ENCODE measurements at regions of chr18 and their contacts with region 1.

Region 1: DNA sequence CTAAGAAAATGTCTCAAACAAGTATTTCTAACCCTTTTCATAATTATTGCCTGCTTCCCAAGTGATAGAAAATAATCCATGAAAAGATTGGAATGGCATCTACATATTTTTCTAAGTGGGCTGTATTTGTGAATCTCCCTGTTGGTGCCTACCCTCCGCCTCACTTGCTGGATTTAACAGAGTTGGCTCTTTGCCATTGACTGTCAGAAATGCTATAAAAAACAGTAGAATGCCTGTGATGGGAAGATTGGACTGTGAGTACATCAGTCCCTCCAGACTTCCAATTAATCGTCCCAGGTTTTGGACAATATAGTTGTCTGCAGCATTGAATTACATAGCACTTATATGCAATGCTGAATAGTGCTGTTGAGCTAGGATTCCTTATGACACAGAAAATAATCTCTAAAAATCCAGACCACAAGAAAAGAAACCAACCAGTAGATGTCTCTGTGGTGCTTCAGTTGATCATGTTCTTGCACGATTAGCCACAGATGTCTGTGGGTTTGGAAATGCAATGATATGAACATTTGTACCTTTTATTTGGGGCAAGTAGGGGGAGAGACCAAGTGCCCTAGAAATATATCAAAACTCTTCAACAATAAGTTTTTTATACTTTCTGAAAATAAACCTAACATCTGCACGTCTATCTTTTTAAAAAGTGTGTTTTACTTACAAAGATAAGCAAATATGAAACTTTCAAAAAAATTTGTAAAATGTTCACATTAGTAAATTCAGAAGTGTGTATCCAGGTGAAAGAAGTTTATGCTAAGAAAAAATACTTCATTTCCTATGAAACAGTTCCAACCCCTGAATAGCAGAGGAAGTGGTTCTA is 88.5 kb downstream of the DYNAP start:
- DNase-seq: no peak
- ATAC-seq: peak; percentile 71

Region 2: DNA sequence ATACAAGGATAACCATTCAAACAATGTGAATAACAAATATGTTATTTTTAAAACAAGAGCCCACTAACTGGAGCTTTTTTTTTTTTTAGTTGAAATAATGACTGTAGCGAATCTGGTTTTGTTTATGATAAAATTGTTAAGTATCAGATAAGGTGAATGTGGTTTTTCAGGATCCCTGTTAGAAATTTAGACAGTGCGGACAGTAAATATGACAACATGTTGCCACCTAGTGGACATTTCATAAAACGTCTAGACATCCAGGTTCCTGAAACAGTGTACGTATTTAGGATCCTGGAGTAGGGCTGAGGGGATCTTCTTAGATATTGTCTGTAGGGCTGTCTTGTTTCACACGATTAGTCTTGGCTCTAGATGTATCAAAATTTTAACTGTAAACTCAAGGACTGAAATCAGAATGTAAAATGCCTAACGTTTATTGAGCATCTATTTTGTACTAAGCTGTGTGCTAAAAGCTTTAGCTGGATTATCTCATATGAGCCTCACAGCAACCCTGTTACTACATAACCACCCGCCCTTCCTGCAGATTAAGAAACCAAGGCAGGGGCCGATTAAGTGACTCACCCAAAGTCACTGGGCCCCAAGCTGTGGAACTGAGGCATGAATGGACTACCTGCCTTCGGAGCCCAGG is 303.6 kb after region 1 on chr18:
- intact Hi-C with region 1: loop called (anchors 5 kb)
- DNase-seq: no peak
- ATAC-seq: peak; percentile 66

Region 3: DNA sequence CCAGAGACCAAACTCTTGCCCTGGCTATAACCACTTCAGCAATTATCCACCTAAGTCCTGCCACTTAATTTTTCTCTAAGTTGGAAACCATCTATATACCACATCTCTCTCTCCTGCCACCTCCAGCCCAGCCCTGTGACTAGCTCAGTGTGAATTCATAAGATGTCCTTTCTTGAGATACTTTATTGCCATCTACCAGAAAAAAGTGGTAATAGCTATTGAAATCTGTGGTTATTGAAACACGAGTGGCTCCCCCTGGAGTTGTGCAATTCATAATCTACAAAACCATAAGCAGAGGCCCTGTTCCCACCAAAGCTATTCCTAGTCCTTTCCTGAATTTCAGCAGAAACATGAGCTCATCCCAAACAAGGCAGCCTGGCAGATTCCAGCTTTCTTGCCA is 1634.9 kb after region 1 on chr18:
- intact Hi-C with region 1: no loop called
- DNase-seq: no peak
- ATAC-seq: no peak

Measured in sciatic nerve (tissue), 2 donors.